ENCODE measurements at regions of chr4 and their contacts with region 1.

Region 1: DNA sequence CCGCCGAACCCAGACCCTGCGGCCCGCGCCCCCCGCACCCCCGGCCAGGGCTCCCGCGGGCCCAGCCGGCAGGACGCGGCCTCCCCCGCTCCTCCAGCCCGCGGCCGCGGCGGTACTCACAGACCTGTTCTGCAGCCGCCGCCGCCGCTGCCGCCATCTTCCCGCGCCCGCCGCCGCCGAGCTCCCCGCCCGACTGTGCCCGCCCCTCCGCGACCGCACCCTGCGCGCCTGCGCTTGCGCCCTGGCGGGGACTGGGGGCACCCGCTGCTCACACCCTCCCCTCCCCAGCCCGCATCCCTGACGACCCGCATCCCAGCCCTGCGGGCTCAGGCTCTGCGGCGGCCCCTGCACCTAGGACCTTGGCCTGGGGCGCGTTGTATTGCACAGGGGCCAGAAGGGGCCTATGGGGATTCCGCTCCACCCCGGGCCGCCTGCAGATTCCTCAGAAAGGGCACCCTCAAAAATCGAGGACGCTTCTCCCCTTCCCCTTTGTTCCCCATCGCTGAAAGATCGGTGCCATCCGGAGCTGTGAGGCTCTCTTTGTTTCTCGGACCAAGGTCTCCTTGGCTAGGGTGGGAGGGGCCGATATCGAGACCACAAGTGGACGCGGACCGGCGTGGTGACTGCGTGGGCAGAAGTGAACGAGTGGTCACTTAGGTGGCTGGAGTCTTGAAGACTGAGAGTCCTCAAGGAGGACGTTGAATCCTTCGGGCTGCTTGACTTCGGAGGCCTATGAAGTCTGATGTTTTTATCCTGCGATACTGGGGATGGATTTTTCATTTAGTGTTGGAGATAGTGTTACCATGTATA is at the start of gene SGCB:
- DNase-seq: peak; percentile 55 to 82 (median 69)
- ATAC-seq: peak; percentile 93
- H3K4me3 ChIP-seq: peak within 1 kb of the TSS; percentile 61
- H3K4me3 Mint-ChIP-seq: peak within 1 kb of the TSS; percentile 81 to 92 (median 89)
- H3K27ac ChIP-seq: peak within 1 kb of the TSS; percentile 38
- H3K27ac Mint-ChIP-seq: peak within 1 kb of the TSS; percentile 48 to 79 (median 76)
- H3K4me1 ChIP-seq: peaks cover 0 to 5% of the 10 kb centered on the region in 2 donors
- H3K4me1 Mint-ChIP-seq: peaks cover 18 to 37% (median 26%) of the 10 kb centered on the region in 7 donors
- H3K27me3 ChIP-seq: no peaks in the 10 kb centered on the region
- H3K27me3 Mint-ChIP-seq: peaks cover 20 to 41% (median 34%) of the 10 kb centered on the region in 5 donors
- total RNA-seq, gene SGCB: 3.6 to 11.6 (median 4.5) TPM

Region 2: DNA sequence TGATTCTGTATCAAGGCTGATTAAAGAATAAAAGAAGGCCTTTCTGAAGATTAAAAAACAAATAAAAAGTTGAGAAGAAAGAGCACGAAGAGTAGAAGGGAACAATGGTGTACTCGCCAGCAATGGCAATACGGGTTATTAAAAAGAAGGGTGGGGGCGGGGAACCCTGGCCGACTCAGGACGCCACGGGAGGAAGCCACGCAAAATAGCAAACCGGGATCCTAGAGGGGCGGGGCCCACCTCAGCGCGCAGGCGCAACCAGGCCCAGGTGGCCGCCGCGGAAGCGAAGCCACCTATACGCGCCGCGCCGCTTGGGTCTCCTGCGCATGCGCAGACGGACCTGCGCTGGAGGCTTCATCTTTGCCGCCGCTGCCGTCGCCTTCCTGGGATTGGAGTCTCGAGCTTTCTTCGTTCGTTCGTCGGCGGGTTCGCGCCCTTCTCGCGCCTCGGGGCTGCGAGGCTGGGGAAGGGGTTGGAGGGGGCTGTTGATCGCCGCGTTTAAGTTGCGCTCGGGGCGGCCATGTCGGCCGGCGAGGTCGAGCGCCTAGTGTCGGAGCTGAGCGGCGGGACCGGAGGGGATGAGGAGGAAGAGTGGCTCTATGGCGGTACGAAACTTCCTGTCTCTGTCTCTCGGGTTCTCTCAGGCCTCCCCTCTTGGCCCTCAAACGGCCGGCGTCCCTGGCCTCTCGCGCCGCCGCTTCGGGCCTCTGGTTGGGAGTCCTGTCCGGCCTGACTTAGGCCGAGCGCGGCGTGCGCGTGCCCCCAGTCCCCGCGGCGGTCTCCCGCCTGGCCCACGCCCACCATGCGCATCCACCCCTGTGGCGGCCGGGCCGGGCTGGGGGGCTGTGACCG is 1339.2 kb after region 1 on chr4 and contains the start of gene FIP1L1:
- CTCF ChIA-PET with region 1: no interaction called
- POLR2A ChIA-PET with region 1: no interaction called
- intact Hi-C with region 1: loop called in 1 of 2 experiments (anchors 5 kb)
- DNase-seq: peak; percentile 92 to 97 (median 96)
- ATAC-seq: peak; percentile 97
- H3K4me3 ChIP-seq: peak within 1 kb of the TSS; percentile 85
- H3K4me3 Mint-ChIP-seq: peak within 1 kb of the TSS; percentile 94 to 100 (median 99)
- H3K27ac ChIP-seq: peak within 1 kb of the TSS; percentile 89
- H3K27ac Mint-ChIP-seq: peak within 1 kb of the TSS; percentile 97 to 100 (median 99)
- H3K4me1 ChIP-seq: peaks cover 17 to 21% of the 10 kb centered on the region in 2 donors
- H3K4me1 Mint-ChIP-seq: peaks cover 20 to 53% (median 37%) of the 10 kb centered on the region in 7 donors
- H3K27me3 ChIP-seq: no peaks in the 10 kb centered on the region
- H3K27me3 Mint-ChIP-seq: peaks cover 0 to 15% (median 4%) of the 10 kb centered on the region in 5 donors
- total RNA-seq, gene FIP1L1: 57.1 to 91.0 (median 78.7) TPM